Common myeloid progenitor, CD34-positive (primary cell): ENCODE measurements at regions of chr1 and their contacts with region 1.

Region 1: DNA sequence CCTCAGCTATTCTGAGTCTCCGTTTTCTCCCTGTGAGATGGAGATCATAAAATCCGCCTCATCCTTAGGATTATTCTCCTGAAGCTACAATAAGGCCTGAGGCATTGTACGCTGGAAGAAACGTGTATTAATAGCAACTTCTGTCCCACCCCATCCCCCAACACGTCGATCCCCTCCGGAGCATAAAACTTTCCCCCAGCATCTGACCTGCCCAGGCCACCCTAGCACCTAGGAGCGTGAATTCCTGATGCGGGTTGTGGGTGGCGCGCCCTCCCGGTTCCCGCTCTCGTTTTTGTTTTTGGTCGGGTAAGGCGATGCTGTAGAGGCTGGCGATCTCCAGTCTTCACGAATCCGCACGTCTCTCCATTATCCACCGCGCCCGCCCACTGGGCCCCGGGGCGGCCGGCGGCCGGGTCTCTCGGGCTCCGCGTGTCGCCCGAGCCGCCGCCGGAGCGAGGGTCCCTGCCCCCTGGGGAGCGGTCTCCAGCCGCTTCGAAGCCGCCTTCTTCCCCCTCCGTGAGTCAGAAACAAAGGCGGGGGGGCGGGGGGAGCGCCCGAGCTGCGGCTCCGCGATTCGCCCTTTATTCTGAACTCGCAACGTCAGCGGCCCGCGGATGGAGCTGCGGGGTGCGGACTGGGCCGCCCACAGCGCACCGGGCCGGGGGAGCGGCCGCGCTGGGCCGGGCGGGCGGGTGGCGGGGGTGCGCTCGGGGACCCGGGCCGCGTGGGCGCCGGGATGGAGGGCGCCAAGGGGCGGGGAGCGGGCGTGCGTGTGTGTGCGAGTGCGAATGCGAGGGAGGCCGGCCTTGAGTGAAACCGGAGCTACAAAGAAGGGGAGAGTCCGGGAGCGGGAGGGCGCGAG is at the start of gene PLEKHO1:
- DNase-seq: peak; percentile 85 to 93 (median 90)
- H3K4me3 ChIP-seq: peak within 1 kb of the TSS; percentile 69 to 95 (median 84)
- H3K27ac ChIP-seq: peak within 1 kb of the TSS; percentile 73 to 88
- H3K4me1 ChIP-seq: peaks cover 25 to 67% (median 46%) of the 10 kb centered on the region in 4 experiments
- H3K27me3 ChIP-seq: no peaks in the 10 kb centered on the region

Region 2: GRCh38 chr1:149927503-149928387 is 221.8 kb before region 1 on chr1 and contains the start of gene SF3B4:
- CTCF ChIA-PET with region 1: no interaction called
- POLR2A ChIA-PET with region 1: interaction called, 13 read pairs
- DNase-seq: peak; percentile 95 to 97 (median 96)
- H3K4me3 ChIP-seq: peak within 1 kb of the TSS; percentile 85 to 99 (median 90)
- H3K27ac ChIP-seq: peak within 1 kb of the TSS; percentile 88 to 92
- H3K4me1 ChIP-seq: peaks cover 7 to 33% (median 18%) of the 10 kb centered on the region in 4 experiments
- H3K27me3 ChIP-seq: no peaks in the 10 kb centered on the region

Region 3: GRCh38 chr1:150162862-150163706 is 13.6 kb after region 1 on chr1:
- CTCF ChIA-PET with region 1: interaction called, 39 read pairs
- POLR2A ChIA-PET with region 1: interaction called, 49 read pairs
- DNase-seq: peak; percentile 71 to 91 (median 91)
- H3K4me3 ChIP-seq: peak overlapping the region in 6 of 7 experiments; percentile 15 to 67 (median 44)
- H3K27ac ChIP-seq: peak overlapping the region in 1 of 2 experiments; percentile 74
- H3K4me1 ChIP-seq: peaks cover 43 to 79% (median 76%) of the 10 kb centered on the region in 4 experiments
- H3K27me3 ChIP-seq: no peaks in the 10 kb centered on the region

Region 4: GRCh38 chr1:150168960-150169601 is 19.6 kb after region 1 on chr1:
- CTCF ChIA-PET with region 1: interaction called, 39 read pairs
- POLR2A ChIA-PET with region 1: interaction called, 10 read pairs
- DNase-seq: peak; percentile 64 to 70 (median 65)
- H3K4me3 ChIP-seq: no peak overlapping the region
- H3K27ac ChIP-seq: no peak overlapping the region
- H3K4me1 ChIP-seq: peaks cover 9 to 21% (median 19%) of the 10 kb centered on the region in 4 experiments
- H3K27me3 ChIP-seq: no peaks in the 10 kb centered on the region

Region 5: GRCh38 chr1:150186789-150187559 is 37.5 kb after region 1 on chr1:
- CTCF ChIA-PET with region 1: interaction called, 10 read pairs
- POLR2A ChIA-PET with region 1: interaction called, 3 read pairs
- DNase-seq: peak; percentile 83 to 90 (median 88)
- H3K4me3 ChIP-seq: peak overlapping the region in 6 of 7 experiments; percentile 2 to 80 (median 56)
- H3K27ac ChIP-seq: peak overlapping the region; percentile 30 to 88
- H3K4me1 ChIP-seq: peaks cover 2 to 12% (median 9%) of the 10 kb centered on the region in 4 experiments
- H3K27me3 ChIP-seq: no peaks in the 10 kb centered on the region